B cell (primary cell): ENCODE measurements at regions of chr5 and their contacts with region 1.

Region 1: GRCh38 chr5:154683101-154683880 is 71.9 kb upstream of the LARP1 start:
- DNase-seq: no peak
- ATAC-seq: peak; percentile 44
- H3K4me3 ChIP-seq: peak overlapping the region; percentile 21 to 75 (median 57)
- H3K4me3 Mint-ChIP-seq: peak overlapping the region; percentile 78
- H3K27ac ChIP-seq: peak overlapping the region in 1 of 2 donors; percentile 55
- H3K27ac Mint-ChIP-seq: peak overlapping the region; percentile 42
- H3K4me1 ChIP-seq: peaks cover 4 to 17% of the 10 kb centered on the region in 2 donors
- H3K4me1 Mint-ChIP-seq: peaks cover 4% of the 10 kb centered on the region
- H3K27me3 ChIP-seq: peaks cover 0 to 8% (median 2%) of the 10 kb centered on the region in 4 experiments
- H3K27me3 Mint-ChIP-seq: no peaks in the 10 kb centered on the region
- CTCF ChIP-seq: no peak

Region 2: DNA sequence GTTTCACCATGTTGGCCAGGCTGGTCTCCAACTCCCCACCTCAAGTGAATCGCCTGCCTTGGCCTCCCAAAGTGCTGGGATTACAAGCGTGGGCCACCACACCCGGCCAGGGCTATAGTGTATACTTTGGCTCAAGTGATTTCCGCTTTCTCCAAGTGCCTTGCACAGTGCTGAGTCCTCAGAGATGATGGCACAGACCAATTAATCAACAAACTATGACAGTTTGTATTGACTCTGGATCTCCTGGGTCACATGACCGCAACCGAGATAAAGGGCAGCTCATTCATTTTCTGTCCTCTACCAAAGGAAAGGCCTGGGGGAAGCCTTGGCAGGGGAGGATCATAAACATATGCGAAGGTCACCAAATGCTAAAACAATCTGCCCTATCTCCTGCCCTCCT is 60.5 kb after region 1 on chr5:
- CTCF ChIA-PET with region 1: no interaction called
- POLR2A ChIA-PET with region 1: no interaction called
- intact Hi-C with region 1: no loop called
- DNase-seq: no peak
- ATAC-seq: no peak
- H3K4me3 ChIP-seq: no peak overlapping the region
- H3K4me3 Mint-ChIP-seq: no peak overlapping the region
- H3K27ac ChIP-seq: no peak overlapping the region
- H3K27ac Mint-ChIP-seq: no peak overlapping the region
- H3K4me1 ChIP-seq: no peaks in the 10 kb centered on the region
- H3K4me1 Mint-ChIP-seq: no peaks in the 10 kb centered on the region
- H3K27me3 ChIP-seq: no peaks in the 10 kb centered on the region
- H3K27me3 Mint-ChIP-seq: no peaks in the 10 kb centered on the region
- CTCF ChIP-seq: no peak

Region 3: DNA sequence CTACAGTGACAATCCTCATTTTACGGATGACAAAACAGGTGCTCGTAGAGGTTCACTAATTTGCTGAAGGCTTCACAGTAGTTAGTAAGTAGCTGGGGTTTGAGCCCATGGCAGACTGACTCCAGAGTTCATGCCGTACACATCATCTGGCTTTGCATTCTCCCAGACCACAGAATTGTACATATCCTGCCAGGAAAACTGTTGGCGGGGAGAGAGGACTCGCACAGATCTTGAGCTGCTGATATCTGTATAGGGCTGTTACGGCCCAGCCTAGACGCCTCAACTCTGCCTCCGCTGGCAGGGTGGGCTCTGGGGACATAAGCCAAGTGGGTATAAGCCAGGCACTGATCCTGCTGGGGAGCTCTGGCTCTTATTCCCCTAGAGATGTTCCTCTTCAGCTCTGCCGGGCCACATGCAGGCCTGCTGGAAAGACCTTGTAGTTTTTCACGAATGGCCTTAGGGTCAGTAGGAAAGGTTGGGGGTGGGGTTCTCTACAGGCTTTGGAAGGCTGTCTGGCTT is 88.2 kb after region 1 on chr5:
- CTCF ChIA-PET with region 1: no interaction called
- POLR2A ChIA-PET with region 1: interaction called, 12 read pairs
- intact Hi-C with region 1: no loop called
- DNase-seq: no peak
- ATAC-seq: no peak
- H3K4me3 ChIP-seq: no peak overlapping the region
- H3K4me3 Mint-ChIP-seq: peak overlapping the region; percentile 60
- H3K27ac ChIP-seq: peak overlapping the region in 1 of 2 donors; percentile 90
- H3K27ac Mint-ChIP-seq: peak overlapping the region; percentile 82
- H3K4me1 ChIP-seq: peaks cover 69 to 71% of the 10 kb centered on the region in 2 donors
- H3K4me1 Mint-ChIP-seq: peaks cover 82% of the 10 kb centered on the region
- H3K27me3 ChIP-seq: no peaks in the 10 kb centered on the region
- H3K27me3 Mint-ChIP-seq: no peaks in the 10 kb centered on the region
- CTCF ChIP-seq: no peak